Activated CD8-positive, alpha-beta memory T cell treated with anti-CD3 and anti-CD28 coated beads, Interleukin-2, amount 10 ng/mL, durations not matched to agents 7 days and 5 days (primary cell): ENCODE measurements at regions of chr5 and their contacts with region 1.

Region 1: GRCh38 chr5:149376104-149376503 is 3.0 kb downstream of the IL17B start:
- DNase-seq: no peak
- ATAC-seq: no peak
- H3K4me3 Mint-ChIP-seq: no peak overlapping the region
- H3K27ac Mint-ChIP-seq: no peak overlapping the region
- H3K4me1 Mint-ChIP-seq: no peaks in the 10 kb centered on the region
- H3K27me3 Mint-ChIP-seq: no peaks in the 10 kb centered on the region

Region 2: GRCh38 chr5:149195337-149195887 is 180.7 kb before region 1 on chr5:
- CTCF ChIA-PET with region 1: no interaction called
- DNase-seq: peak; percentile 21
- ATAC-seq: no peak
- H3K4me3 Mint-ChIP-seq: no peak overlapping the region
- H3K27ac Mint-ChIP-seq: no peak overlapping the region
- H3K4me1 Mint-ChIP-seq: no peaks in the 10 kb centered on the region
- H3K27me3 Mint-ChIP-seq: peaks cover 16% of the 10 kb centered on the region

Region 3: DNA sequence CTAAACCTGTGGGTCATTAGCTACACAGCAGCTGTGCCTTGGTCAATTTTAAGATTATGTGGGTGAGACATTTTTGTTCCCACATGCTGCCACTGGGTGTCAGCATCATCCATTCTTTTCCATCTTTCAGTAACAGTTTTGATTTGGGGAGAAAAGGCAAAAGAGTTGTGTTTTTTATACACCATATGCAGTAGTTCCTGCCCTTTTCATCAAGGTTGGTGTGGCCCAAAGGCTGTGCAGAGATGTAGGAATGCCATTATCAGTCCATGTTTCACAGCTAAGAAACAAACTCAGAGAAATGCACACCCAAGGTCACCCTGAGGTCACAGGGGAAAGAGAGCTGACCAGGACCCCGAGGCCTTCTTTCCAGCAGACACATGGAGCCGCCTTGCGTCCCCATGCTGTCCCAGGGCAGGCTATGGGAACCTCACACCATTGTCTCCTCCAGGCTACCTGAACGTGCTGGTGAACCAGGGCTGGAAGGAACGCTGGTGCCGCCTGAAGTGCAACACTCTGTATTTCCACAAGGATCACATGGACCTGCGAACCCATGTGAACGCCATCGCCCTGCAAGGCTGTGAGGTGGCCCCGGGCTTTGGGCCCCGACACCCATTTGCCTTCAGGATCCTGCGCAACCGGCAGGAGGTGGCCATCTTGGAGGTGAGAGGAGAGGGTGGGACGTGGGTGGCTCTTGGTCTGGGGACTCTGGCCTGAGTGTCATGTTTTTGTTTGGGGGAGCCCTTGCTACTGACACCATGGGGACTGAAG is 58.6 kb before region 1 on chr5:
- CTCF ChIA-PET with region 1: interaction called, 245 read pairs
- DNase-seq: no peak
- ATAC-seq: peak; percentile 64
- H3K4me3 Mint-ChIP-seq: no peak overlapping the region
- H3K27ac Mint-ChIP-seq: no peak overlapping the region
- H3K4me1 Mint-ChIP-seq: peaks cover 3% of the 10 kb centered on the region
- H3K27me3 Mint-ChIP-seq: no peaks in the 10 kb centered on the region